ENCODE measurements at regions of chr1 and their contacts with region 1.

Region 1: GRCh38 chr1:206663832-206664652 is 20.7 kb upstream of the MAPKAPK2 start:
- DNase-seq: peak; percentile 83
- ATAC-seq: peak; percentile 90
- H3K4me3 Mint-ChIP-seq: peak overlapping the region; percentile 58
- H3K27ac Mint-ChIP-seq: no peak overlapping the region
- H3K4me1 Mint-ChIP-seq: peaks cover 9% of the 10 kb centered on the region; the same call in 1 of the 2 replicates
- H3K27me3 Mint-ChIP-seq: peaks cover 26% of the 10 kb centered on the region
- CTCF ChIP-seq: peak; percentile 86

Region 2: GRCh38 chr1:206600527-206600926 is 63.5 kb before region 1 on chr1:
- CTCF ChIA-PET with region 1: no interaction called
- POLR2A ChIA-PET with region 1: no interaction called
- DNase-seq: no peak
- ATAC-seq: no peak
- H3K4me3 Mint-ChIP-seq: no peak overlapping the region
- H3K27ac Mint-ChIP-seq: no peak overlapping the region
- H3K4me1 Mint-ChIP-seq: no peaks in the 10 kb centered on the region
- H3K27me3 Mint-ChIP-seq: no peaks in the 10 kb centered on the region
- CTCF ChIP-seq: no peak

Region 3: GRCh38 chr1:206649261-206649921 is 14.7 kb before region 1 on chr1:
- CTCF ChIA-PET with region 1: interaction called, 28 read pairs
- POLR2A ChIA-PET with region 1: no interaction called
- DNase-seq: no peak
- ATAC-seq: no peak
- H3K4me3 Mint-ChIP-seq: no peak overlapping the region
- H3K27ac Mint-ChIP-seq: no peak overlapping the region
- H3K4me1 Mint-ChIP-seq: peaks cover 13% of the 10 kb centered on the region
- H3K27me3 Mint-ChIP-seq: no peaks in the 10 kb centered on the region
- CTCF ChIP-seq: no peak

Region 4: GRCh38 chr1:206674745-206675175 is 10.7 kb after region 1 on chr1:
- CTCF ChIA-PET with region 1: interaction called, 37 read pairs
- POLR2A ChIA-PET with region 1: no interaction called
- DNase-seq: no peak
- ATAC-seq: no peak
- H3K4me3 Mint-ChIP-seq: no peak overlapping the region
- H3K27ac Mint-ChIP-seq: no peak overlapping the region
- H3K4me1 Mint-ChIP-seq: peaks cover 8% of the 10 kb centered on the region
- H3K27me3 Mint-ChIP-seq: peaks cover 8% of the 10 kb centered on the region; the same call in 1 of the 2 replicates
- CTCF ChIP-seq: no peak

Region 5: GRCh38 chr1:206684478-206685333 is 20.7 kb after region 1 on chr1 and contains the start of gene MAPKAPK2:
- CTCF ChIA-PET with region 1: interaction called, 24 read pairs
- POLR2A ChIA-PET with region 1: no interaction called
- DNase-seq: peak; percentile 68
- ATAC-seq: peak; percentile 45
- H3K4me3 Mint-ChIP-seq: peak within 1 kb of the TSS; percentile 86
- H3K27ac Mint-ChIP-seq: peak within 1 kb of the TSS; percentile 60; the same call in 1 of the 2 replicates
- H3K4me1 Mint-ChIP-seq: peaks cover 43% of the 10 kb centered on the region
- H3K27me3 Mint-ChIP-seq: peaks cover 59% of the 10 kb centered on the region
- CTCF ChIP-seq: no peak
- total RNA-seq, gene MAPKAPK2: 46.4 to 54.9 TPM (median 48.9 TPM) in 3 replicates

Region 6: GRCh38 chr1:206706298-206706791 is 42.3 kb after region 1 on chr1:
- CTCF ChIA-PET with region 1: interaction called, 16 read pairs
- POLR2A ChIA-PET with region 1: no interaction called
- DNase-seq: no peak
- ATAC-seq: peak; percentile 50
- H3K4me3 Mint-ChIP-seq: no peak overlapping the region
- H3K27ac Mint-ChIP-seq: no peak overlapping the region
- H3K4me1 Mint-ChIP-seq: peaks cover 76% of the 10 kb centered on the region
- H3K27me3 Mint-ChIP-seq: no peaks in the 10 kb centered on the region
- CTCF ChIP-seq: no peak